ENCODE measurements at regions of chr1 and their contacts with region 1.

Region 1: GRCh38 chr1:43650310-43651085 is 549 bp downstream of the KDM4A start:
- DNase-seq: peak; percentile 97 to 99
- ATAC-seq: peak; percentile 88 to 89
- H3K4me3 ChIP-seq: peak overlapping the region; percentile 84
- H3K27ac ChIP-seq: peak overlapping the region; percentile 93
- H3K4me1 ChIP-seq: peaks cover 20% of the 10 kb centered on the region; the same call in 1 of the 3 replicates
- CTCF ChIP-seq: no peak
- EP300 ChIP-seq: no peak
- POLR2A ChIP-seq: peak; percentile 99
- RAD21 ChIP-seq: no peak

Region 2: DNA sequence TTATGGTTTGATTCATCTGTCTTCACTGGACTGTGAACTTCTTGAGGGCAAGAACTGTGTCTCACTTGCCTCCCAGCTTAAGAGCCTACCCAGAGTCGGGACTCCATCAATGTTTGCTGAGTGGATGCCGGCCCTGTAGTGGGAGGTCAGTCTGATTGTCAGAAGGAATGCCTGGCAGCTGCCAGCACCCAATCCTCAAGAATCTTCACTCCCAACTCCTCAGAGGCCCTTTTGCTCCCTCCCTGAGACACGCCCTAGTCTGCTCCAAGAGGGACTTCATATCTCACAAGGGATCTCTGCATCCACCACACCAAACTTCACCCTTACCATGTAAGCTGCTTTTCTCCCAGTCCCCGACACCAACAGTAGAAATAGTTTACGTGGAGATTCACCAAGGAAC is 15.8 kb before region 1 on chr1:
- CTCF ChIA-PET with region 1: no interaction called
- POLR2A ChIA-PET with region 1: interaction called, 24 read pairs
- DNase-seq: peak in 1 of 2 experiments; percentile 37
- ATAC-seq: peak; percentile 64 to 72; a peak in 5 of 6 replicates
- H3K4me3 ChIP-seq: no peak overlapping the region
- H3K27ac ChIP-seq: no peak overlapping the region
- H3K4me1 ChIP-seq: peaks cover 9% of the 10 kb centered on the region; the same call in 2 of the 3 replicates
- CTCF ChIP-seq: no peak
- EP300 ChIP-seq: no peak
- POLR2A ChIP-seq: no peak
- RAD21 ChIP-seq: no peak

Region 3: GRCh38 chr1:43666608-43667007 is 16.1 kb after region 1 on chr1:
- CTCF ChIA-PET with region 1: interaction called, 4 read pairs
- POLR2A ChIA-PET with region 1: interaction called, 10 read pairs
- DNase-seq: no peak
- ATAC-seq: no peak
- H3K4me3 ChIP-seq: no peak overlapping the region
- H3K27ac ChIP-seq: no peak overlapping the region
- H3K4me1 ChIP-seq: no peaks in the 10 kb centered on the region; the same call in 2 of the 3 replicates
- CTCF ChIP-seq: no peak
- EP300 ChIP-seq: no peak
- POLR2A ChIP-seq: no peak
- RAD21 ChIP-seq: no peak

Region 4: DNA sequence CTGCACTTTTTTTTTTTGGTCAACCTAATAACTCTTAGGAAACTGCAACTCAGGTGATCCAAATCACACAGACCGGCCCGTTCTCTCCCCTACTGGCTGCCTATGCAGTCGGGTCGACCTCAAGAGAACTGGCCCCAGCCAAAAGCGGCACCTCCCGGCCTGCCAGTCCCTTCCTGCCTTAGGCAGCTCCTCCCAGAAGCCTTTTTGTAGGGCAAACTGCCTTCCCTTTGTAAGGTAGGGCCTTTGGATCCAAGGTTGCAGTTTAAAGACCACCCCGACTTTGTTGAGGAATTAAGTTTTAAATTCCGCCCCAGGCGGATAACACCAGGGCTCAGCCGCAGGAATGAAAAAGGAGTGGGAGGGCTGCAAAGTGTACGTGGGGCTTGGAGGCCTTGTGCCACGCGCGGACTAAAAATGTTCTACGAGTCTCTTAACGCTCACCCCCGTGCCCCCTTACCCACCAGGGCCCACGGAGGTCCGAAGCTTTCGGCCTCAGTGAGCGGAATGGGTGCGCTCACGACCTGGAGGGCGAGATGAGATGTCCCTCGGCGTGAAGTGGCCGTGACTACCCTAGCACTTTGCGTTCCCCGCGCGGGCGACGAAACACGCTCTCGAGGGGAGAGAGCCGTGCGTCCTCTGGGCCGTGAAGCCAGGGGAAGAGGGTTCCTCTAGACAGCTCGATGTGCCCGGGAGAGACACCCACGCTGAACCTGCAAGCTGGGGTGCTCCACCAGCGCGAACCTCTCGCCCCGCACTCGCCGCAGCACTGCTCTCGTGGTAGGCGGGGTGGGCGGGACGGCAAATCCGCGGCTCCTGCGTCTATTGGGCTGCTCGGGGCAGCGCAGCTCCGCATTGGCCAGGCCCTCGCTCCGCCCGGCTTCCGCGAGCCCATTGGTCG is 56.3 kb after region 1 on chr1:
- CTCF ChIA-PET with region 1: no interaction called
- POLR2A ChIA-PET with region 1: interaction called, 15 read pairs
- DNase-seq: peak; percentile 73 to 86
- ATAC-seq: peak; percentile 88 to 96
- H3K4me3 ChIP-seq: peak overlapping the region; percentile 75
- H3K27ac ChIP-seq: peak overlapping the region; percentile 93 to 98
- H3K4me1 ChIP-seq: peaks cover 37% of the 10 kb centered on the region
- CTCF ChIP-seq: no peak
- EP300 ChIP-seq: no peak
- POLR2A ChIP-seq: peak; percentile 90
- RAD21 ChIP-seq: no peak